ENCODE measurements at regions of chr1 and their contacts with region 1.

Region 1: DNA sequence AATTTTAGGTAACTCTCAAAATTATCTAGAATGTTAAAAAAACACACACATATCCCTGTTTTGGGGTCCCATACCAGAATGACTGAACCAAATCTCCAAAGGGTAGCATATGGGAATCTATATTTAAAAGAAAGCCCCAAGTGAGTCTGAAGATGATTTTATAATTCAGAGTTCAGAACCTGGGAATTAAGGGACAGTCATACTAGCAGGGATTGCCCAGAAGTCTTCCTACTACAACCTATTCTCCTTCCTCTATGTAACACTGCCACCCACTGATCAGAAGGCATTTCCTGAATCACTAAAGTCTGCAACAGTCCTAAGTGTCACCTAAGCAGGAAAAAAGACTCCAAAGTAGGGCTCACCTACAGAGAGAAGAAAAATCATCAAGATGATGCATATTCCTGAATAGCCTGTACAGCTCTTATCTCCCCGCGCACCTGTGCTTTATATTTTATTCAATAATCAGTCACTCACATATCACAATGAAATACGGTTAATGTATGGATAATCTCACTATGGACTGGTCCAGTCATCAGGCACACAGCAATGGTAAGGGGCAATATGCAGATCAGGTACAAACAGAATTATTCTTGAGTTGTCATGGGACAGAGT is 4.9 kb downstream of the RGS1 start:
- DNase-seq: peak; percentile 67

Region 2: GRCh38 chr1:192367436-192367835 is 213.0 kb before region 1 on chr1:
- in situ Hi-C with region 1: no loop called
- DNase-seq: no peak

Region 3: GRCh38 chr1:192477630-192478029 is 102.8 kb before region 1 on chr1:
- in situ Hi-C with region 1: loop called (anchors 25 kb)
- DNase-seq: peak; percentile 68

Region 4: GRCh38 chr1:192775631-192776030 is 195.2 kb after region 1 on chr1:
- in situ Hi-C with region 1: no loop called
- DNase-seq: no peak

Measured in ACHN (cell line).